ENCODE measurements at regions of chr14 and their contacts with region 1.

Region 1: DNA sequence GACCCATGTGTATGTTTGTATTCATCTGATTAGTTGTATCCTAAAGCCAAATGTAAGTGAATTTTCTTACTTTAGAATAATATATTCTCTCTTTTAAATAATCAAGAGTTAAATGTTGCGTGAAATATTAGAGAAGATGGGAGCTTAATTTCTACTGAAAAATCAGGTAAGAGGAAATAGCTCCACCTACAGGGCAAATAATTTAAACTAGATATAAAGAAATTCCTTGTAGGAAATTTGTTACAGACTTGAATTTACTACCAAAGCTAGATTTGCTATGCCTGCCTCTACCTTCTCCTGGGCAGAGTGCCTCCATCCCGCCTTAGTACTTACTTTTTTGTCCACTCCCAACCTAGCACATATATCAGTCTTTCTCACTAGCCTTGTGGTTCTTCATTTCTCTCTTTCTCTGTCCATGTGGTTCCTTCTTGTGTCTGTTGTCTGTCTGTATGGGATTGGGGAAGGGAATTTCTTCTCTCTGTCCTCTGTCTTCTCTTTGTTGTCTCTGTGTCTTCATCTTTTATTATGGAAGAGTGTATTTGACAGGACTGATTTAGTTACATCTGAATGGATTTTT is 44.7 kb downstream of the PALS1 start:
- DNase-seq: no peak
- ATAC-seq: no peak
- H3K4me3 Mint-ChIP-seq: no peak overlapping the region
- H3K27ac Mint-ChIP-seq: no peak overlapping the region
- H3K4me1 Mint-ChIP-seq: no peaks in the 10 kb centered on the region
- H3K27me3 Mint-ChIP-seq: no peaks in the 10 kb centered on the region

Region 2: DNA sequence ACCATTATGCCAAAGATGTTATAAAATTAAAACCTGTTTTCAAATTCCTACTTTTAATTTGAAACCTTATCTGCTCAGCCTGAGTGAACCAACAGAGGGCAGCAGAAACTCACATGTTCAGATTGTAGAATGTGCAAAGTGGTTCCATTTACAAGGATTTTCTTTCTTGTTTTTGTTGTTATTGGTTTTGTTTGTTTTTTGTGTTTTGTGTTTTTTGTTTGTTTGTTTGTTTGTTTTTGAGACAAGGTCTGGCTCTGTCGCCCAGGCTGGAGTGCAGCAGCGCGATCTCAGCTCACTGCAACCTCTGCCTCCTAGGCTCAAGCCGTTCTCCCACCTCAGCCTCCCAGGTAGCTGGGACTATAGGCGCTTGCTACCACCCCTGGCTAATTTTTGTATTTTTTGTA is 119.5 kb before region 1 on chr14:
- CTCF ChIA-PET with region 1: interaction called, 60 read pairs
- POLR2A ChIA-PET with region 1: no interaction called
- DNase-seq: peak; percentile 55
- ATAC-seq: no peak
- H3K4me3 Mint-ChIP-seq: no peak overlapping the region
- H3K27ac Mint-ChIP-seq: no peak overlapping the region
- H3K4me1 Mint-ChIP-seq: peaks cover 6% of the 10 kb centered on the region
- H3K27me3 Mint-ChIP-seq: no peaks in the 10 kb centered on the region

Region 3: GRCh38 chr14:67269298-67270061 is 16.5 kb before region 1 on chr14:
- CTCF ChIA-PET with region 1: interaction called, 11 read pairs
- POLR2A ChIA-PET with region 1: no interaction called
- DNase-seq: no peak
- ATAC-seq: no peak
- H3K4me3 Mint-ChIP-seq: no peak overlapping the region
- H3K27ac Mint-ChIP-seq: no peak overlapping the region
- H3K4me1 Mint-ChIP-seq: no peaks in the 10 kb centered on the region
- H3K27me3 Mint-ChIP-seq: no peaks in the 10 kb centered on the region

Region 4: DNA sequence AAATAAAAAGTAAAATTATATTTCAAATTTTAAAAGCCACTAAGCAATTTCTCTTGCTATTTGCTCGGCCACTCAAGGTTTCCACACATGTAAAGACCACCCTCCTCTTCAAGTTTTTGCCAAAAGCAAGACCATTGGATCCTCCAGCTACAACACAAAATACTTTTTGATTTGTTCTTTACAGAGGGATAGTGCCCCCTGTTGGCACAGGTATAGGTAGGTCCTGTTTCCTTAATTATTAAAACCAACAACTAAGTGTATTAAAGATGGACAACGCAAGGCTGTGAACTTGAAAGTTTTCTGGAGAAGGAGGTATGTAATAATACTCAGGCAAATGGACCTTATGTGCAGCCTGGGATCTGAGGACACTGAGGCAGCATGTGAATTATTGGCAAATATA is 49.8 kb after region 1 on chr14:
- CTCF ChIA-PET with region 1: no interaction called
- POLR2A ChIA-PET with region 1: no interaction called
- DNase-seq: peak; percentile 24
- ATAC-seq: no peak
- H3K4me3 Mint-ChIP-seq: no peak overlapping the region
- H3K27ac Mint-ChIP-seq: no peak overlapping the region
- H3K4me1 Mint-ChIP-seq: no peaks in the 10 kb centered on the region
- H3K27me3 Mint-ChIP-seq: no peaks in the 10 kb centered on the region